Tibial artery (tissue), 4 donors: ENCODE measurements at regions of chr15 and their contacts with region 1.

Region 1: GRCh38 chr15:59555696-59556095 is 55.9 kb upstream of the GCNT3 start:
- DNase-seq: no peak
- H3K4me3 ChIP-seq: no peak overlapping the region
- H3K27ac ChIP-seq: no peak overlapping the region
- H3K4me1 ChIP-seq: no peaks in the 10 kb centered on the region
- H3K27me3 ChIP-seq: no peaks in the 10 kb centered on the region
- CTCF ChIP-seq: no peak

Region 2: DNA sequence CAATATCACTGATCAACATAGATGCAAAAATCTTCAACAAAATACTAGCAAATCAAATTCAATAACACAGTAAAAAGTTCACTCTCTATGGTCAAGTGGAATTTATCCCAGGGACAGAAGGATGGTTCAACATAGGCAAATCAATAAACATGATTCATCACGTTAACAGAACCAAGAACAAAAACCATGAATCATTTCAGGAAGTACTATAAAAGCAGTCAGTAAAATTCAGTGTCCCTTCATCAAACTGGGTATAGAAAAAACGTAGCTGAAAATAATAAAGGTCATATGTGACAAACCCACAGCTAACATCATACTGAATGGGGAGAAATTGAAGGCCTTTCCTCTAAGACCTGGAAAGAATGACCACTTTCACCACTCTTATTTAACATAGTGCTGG is 1677.1 kb before region 1 on chr15:
- intact Hi-C with region 1: loop called (anchors 5 kb)
- DNase-seq: no peak
- H3K4me3 ChIP-seq: no peak overlapping the region
- H3K27ac ChIP-seq: no peak overlapping the region
- H3K4me1 ChIP-seq: no peaks in the 10 kb centered on the region
- H3K27me3 ChIP-seq: no peaks in the 10 kb centered on the region
- CTCF ChIP-seq: no peak